Left cardiac atrium (tissue), 4 donors: ENCODE measurements at regions of chr11 and their contacts with region 1.

Region 1: GRCh38 chr11:63490551-63491239 is at the start of gene PLAAT5:
- DNase-seq: peak; percentile 63
- ATAC-seq: peak; percentile 86 to 94
- total RNA-seq, gene PLAAT5: 9.3 to 15.8 TPM

Region 2: GRCh38 chr11:63395697-63396096 is 95.0 kb before region 1 on chr11:
- intact Hi-C with region 1: no loop called
- DNase-seq: no peak
- ATAC-seq: no peak

Region 3: GRCh38 chr11:63629426-63629825 is 138.7 kb after region 1 on chr11:
- intact Hi-C with region 1: loop called in 1 of 2 experiments (anchors 5 kb)
- DNase-seq: no peak
- ATAC-seq: no peak